Posterior vena cava (tissue), 2 donors: ENCODE measurements at regions of chr9 and their contacts with region 1.

Region 1: GRCh38 chr9:136605988-136606660 is 56.6 kb upstream of the EGFL7 start:
- DNase-seq: no peak

Region 2: DNA sequence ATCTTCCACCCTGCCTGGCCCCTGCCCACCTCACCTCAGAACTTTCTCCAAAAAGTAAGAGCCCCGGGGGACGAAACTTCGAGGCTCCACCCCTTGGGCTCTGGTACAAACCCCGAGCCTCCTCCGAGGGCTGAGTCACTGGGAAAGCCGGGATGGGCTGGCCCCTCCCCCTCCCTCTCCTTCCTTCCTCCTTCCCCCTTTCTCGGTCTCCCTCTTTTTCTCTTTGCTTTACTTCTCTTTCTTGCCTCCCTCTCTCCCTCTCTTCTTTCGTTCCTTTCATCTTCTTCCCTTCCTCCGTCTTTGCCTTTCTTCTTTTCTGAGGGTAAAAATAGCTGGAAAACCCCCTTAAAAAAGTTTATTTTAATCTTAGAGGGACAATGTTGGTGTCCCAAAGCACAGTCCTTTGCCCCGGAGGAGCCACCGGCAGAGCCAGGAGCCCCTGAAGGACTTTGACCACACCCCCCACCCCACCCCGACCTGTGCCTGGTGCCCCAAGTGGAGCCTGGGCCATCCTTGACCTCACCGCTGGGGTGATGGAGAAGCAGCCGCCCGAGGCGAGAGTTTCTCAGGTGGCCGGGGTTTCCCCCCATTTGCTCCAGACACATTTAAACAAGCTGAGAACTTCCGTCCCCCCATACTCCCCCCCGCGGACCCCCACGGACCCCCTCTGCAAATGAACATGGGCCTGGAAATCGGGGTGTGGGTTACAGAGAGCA is 54.6 kb before region 1 on chr9:
- intact Hi-C with region 1: no loop called
- DNase-seq: peak; percentile 91

Region 3: DNA sequence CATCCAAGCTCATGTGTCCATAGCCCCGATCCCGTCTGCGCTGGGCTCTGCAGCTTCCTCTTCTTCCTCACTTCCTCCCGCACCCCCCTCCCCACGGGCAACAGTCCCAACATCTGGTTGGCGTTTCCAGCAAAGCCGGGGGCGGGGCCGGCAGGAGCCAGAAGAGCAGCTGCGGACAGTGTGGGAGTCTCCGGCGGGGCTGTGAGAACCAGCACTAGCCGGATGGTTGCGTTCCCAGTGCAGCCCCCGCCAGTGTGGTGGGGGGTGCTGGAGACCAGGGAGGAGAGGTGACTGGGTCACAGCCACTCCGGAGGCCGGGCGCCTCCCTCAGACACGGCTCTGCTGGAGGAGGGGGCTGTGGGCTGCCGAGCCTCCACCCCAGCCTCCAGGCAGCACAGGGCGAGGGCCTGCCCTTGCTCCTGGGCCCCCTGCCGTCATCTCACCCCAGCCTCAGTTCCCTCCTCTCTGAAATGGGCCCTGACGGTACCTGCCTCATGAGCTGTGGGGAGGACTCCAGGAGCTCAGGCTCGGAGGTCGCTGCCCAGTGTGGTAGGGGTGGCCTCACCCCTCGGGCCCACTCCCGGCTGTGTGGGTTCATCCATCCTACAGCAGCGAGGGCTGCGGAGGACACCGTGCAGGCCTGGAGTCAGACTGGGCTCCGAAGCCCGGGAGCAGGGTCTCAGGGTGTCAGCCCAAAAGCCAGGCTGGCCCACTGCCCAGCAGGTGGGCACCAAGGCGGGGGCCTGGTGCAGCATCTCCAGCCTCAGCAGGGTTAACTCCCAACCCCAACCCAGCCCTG is 18.8 kb before region 1 on chr9:
- intact Hi-C with region 1: no loop called
- DNase-seq: peak; percentile 92

Region 4: GRCh38 chr9:137017791-137018497 is 411.8 kb after region 1 on chr9:
- intact Hi-C with region 1: loop called in 1 of 2 experiments (anchors 5 kb)
- DNase-seq: no peak